ENCODE measurements at regions of chr13 and their contacts with region 1.

Region 1: GRCh38 chr13:44758630-44759383 is 182.7 kb upstream of the TSC22D1 start:
- DNase-seq: no peak
- ATAC-seq: peak in 1 of 8 donors; percentile 26
- H3K4me3 ChIP-seq: no peak overlapping the region
- H3K27ac ChIP-seq: no peak overlapping the region
- H3K4me1 ChIP-seq: peaks cover 0 to 25% (median 12%) of the 10 kb centered on the region in 9 donors
- H3K27me3 ChIP-seq: no peaks in the 10 kb centered on the region
- CTCF ChIP-seq: no peak

Region 2: DNA sequence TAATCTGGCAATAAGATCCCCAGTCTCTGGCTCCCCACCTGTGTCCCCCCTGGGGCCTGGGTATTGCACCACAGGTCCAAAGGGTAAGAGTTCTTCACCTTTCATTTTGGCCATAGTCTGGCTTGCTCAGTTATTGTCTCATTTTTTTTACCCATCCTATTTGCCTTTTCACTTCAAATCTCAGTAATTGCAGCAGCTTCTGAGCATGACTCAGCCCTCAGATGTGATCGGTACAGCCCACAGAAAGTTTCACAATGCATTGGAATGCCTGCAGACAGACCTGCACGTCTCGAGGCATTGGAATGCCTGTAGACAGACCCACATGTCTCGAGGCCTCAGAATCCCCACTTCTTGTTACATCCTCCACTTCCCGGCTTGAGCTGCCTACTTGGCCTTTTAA is 56.8 kb after region 1 on chr13:
- intact Hi-C with region 1: no loop called
- DNase-seq: no peak
- ATAC-seq: peak in 2 of 8 donors; percentile 49 to 63
- H3K4me3 ChIP-seq: no peak overlapping the region
- H3K27ac ChIP-seq: no peak overlapping the region
- H3K4me1 ChIP-seq: peaks cover 0 to 15% (median 3%) of the 10 kb centered on the region in 9 donors
- H3K27me3 ChIP-seq: no peaks in the 10 kb centered on the region
- CTCF ChIP-seq: no peak

Region 3: DNA sequence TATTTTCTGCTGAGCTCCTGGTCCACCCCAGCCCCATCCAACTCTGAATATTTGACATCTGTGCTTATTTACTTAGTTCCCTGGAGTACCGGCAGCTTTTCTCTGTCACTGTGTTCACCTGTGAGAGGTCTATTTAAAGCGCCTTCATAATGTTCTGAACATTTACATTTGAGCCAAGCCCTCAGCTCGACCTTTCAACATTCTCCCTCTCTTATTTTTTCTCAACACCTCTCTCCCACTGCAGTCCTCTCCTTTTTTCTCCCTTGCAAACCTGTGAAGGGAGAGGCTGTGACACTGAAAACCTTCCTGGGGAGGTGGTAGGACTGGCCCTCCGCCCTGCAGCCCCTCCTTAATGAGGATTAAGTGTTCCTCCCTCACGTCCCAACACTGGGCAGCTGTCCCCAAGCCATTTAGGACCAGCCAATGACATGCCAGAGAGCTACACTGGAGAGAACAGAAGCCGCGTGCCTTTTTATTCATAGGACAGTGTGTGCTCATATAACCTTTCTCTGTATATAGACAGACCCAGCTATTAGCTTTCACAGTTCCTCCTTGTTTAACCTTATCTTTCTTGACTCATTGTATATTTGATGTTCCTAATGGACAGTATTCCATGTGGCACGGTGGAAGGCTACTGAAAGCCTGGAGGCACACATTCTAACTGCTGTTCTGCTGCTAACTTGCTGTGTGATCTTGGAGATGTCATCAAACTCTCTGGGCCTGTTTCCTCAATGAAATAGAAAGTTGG is 95.7 kb after region 1 on chr13:
- intact Hi-C with region 1: loop called in 1 of 10 experiments (anchors 10 kb)
- DNase-seq: peak; percentile 61 to 70
- ATAC-seq: peak; percentile 90 to 98 (median 95)
- H3K4me3 ChIP-seq: no peak overlapping the region
- H3K27ac ChIP-seq: peak overlapping the region; percentile 31 to 82 (median 73)
- H3K4me1 ChIP-seq: peaks cover 0 to 37% (median 15%) of the 10 kb centered on the region in 9 donors
- H3K27me3 ChIP-seq: no peaks in the 10 kb centered on the region
- CTCF ChIP-seq: no peak

Measured in heart right ventricle (tissue), 16 donors.